Activated CD4-positive, alpha-beta memory T cell treated with anti-CD3 and anti-CD28 coated beads for 36 hours (primary cell): ENCODE measurements at regions of chr14 and their contacts with region 1.

Region 1: DNA sequence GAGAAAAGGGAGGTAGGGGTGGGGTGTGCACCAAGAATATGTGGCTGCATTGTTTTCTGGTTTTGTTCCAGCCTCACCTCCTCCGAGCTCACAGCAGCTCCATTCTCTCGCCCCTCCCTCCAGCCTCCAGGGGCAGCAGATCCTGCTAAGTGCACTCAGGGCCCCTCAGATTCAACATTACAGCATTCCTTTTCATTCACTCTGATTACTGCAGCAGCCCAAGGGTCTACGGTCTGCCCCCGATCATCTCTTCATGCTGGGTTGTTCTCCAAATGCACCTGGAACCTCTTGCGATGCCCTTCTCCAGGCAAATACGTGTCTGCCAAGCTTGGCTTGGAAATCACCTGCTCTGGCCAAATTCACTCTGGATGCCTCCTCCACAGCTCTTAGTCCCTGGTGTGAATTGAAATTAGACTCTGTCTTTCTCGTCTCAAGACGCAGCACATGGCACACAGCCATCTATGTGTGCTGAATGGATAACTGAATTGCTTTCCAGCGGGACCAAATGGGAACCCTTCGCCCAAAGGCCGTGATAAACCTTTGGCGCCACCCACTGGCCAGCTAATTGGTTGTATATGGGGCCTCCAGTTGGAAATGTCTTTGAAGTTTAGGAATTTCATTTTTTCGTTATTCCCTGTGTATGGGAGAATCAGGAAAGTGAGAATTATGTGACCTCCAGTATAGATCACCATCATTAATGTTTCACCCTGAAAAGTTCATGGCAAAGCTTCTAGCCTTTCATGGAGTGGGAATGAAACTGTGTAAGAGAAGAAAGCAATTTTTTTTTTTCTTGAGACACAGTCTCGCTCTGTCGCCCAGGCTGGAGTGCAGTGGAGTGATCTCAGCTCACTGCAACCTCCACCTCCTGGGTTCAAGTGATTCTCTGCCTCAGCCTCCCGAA is 9.6 kb upstream of the HSP90AA1 start:
- DNase-seq: peak; percentile 80
- H3K4me3 Mint-ChIP-seq: no peak overlapping the region
- H3K27ac Mint-ChIP-seq: no peak overlapping the region
- H3K4me1 Mint-ChIP-seq: peaks cover 22% of the 10 kb centered on the region
- H3K27me3 Mint-ChIP-seq: no peaks in the 10 kb centered on the region

Region 2: GRCh38 chr14:101196795-101197591 is 899.5 kb before region 1 on chr14:
- CTCF ChIA-PET with region 1: no interaction called
- POLR2A ChIA-PET with region 1: no interaction called
- intact Hi-C with region 1: no loop called
- DNase-seq: no peak
- H3K4me3 Mint-ChIP-seq: no peak overlapping the region
- H3K27ac Mint-ChIP-seq: no peak overlapping the region
- H3K4me1 Mint-ChIP-seq: no peaks in the 10 kb centered on the region
- H3K27me3 Mint-ChIP-seq: peaks cover 4% of the 10 kb centered on the region

Region 3: GRCh38 chr14:102046343-102047278 is 49.9 kb before region 1 on chr14:
- CTCF ChIA-PET with region 1: interaction called, 21 read pairs
- POLR2A ChIA-PET with region 1: no interaction called
- intact Hi-C with region 1: no loop called
- DNase-seq: peak; percentile 43
- H3K4me3 Mint-ChIP-seq: no peak overlapping the region
- H3K27ac Mint-ChIP-seq: peak overlapping the region; percentile 23
- H3K4me1 Mint-ChIP-seq: no peaks in the 10 kb centered on the region
- H3K27me3 Mint-ChIP-seq: no peaks in the 10 kb centered on the region

Region 4: GRCh38 chr14:102063091-102063802 is 33.2 kb before region 1 on chr14:
- CTCF ChIA-PET with region 1: interaction called, 40 read pairs
- POLR2A ChIA-PET with region 1: no interaction called
- intact Hi-C with region 1: loop called (anchors 1 kb)
- DNase-seq: peak; percentile 79
- H3K4me3 Mint-ChIP-seq: no peak overlapping the region
- H3K27ac Mint-ChIP-seq: no peak overlapping the region
- H3K4me1 Mint-ChIP-seq: peaks cover under 1% of the 10 kb centered on the region
- H3K27me3 Mint-ChIP-seq: no peaks in the 10 kb centered on the region